GM23248 (cell line): ENCODE measurements at regions of chr17 and their contacts with region 1.

Region 1: DNA sequence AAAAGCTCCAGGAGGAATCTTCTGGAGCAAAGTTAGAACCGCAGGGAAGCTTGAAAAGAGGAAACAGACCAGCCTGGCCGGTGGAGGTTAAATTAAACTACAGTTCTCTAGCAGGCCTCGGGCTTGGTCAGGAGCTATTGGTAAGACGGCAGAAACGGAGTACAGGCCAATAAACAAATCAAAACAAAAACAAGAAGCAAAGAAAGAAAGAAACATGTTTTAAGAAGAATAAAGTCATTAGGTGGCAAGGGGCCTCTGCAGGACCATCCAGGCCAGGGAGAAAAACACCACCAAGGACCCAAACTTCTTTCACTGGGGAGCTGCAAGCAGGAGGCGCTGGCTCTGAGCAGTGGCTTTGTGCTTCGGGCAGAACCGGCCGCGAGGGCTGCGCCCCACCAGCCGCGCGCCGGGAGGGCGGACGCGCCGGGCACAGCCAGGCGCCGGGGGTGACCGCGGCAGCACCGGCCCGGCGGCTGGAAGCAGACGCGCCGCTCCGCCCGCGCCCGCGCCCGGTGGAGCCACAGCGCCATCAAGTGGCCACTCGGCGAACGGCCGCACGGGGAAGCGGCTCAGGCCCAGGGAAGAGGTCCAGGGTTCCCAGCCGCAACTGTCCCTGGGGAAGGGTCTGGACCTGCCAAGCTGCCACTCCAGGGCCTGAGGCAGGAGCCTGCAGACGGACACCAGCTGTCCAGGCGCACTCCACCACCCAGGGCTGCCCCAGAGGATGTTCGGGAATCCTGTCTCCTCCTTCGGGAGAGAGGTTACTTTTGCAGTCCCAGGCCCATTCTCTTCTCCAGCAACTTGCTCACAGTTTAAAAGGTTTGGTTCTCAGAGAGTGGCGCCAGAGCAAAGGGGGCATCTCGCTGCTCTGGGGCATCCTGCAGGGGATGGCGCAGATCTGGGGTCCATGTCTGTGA is 419.4 kb downstream of the SOX9 start:
- DNase-seq: peak; percentile 92
- H3K4me3 ChIP-seq: peak overlapping the region; percentile 59
- H3K27ac ChIP-seq: peak overlapping the region; percentile 36
- H3K4me1 ChIP-seq: peaks cover 4% of the 10 kb centered on the region; the same call in 1 of the 2 replicates
- H3K27me3 ChIP-seq: no peaks in the 10 kb centered on the region

Region 2: DNA sequence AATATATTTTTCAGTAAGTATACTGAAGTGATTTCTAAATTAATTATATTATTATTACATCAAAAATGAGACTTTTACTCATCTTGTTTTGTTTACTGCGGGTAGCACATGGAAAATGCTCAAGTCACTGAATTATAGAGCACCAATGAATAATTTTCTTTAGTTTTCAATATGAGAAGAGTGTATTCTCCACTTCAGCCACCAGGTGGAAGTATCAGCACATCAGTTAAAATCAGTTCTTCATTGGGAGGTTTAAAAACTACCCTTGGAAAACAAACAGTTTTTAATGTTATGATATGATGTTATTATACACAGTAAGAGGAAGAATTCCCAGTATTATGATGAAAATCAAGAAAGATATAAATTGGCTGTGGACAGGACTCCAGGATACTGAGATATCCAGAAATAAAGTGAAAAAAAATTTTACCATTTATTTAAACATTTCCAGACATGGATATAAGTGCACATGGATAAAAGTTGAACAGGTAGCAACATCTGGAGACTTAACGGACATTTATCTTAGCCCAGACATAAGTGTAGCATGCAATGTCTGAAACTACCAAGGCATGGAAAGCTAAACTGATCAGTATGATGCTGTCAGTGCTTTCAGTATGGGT is 1903.6 kb before region 1 on chr17:
- in situ Hi-C with region 1: loop called (anchors 25 kb)
- DNase-seq: peak; percentile 60
- H3K4me3 ChIP-seq: no peak overlapping the region
- H3K27ac ChIP-seq: no peak overlapping the region
- H3K4me1 ChIP-seq: no peaks in the 10 kb centered on the region
- H3K27me3 ChIP-seq: 0 out of 2 replicates have a peak, but pooled peaks cover 17% of the 10 kb centered on the region

Region 3: GRCh38 chr17:71118039-71118438 is 1422.2 kb before region 1 on chr17:
- in situ Hi-C with region 1: loop called (anchors 25 kb)
- DNase-seq: peak; percentile 13
- H3K4me3 ChIP-seq: no peak overlapping the region
- H3K27ac ChIP-seq: no peak overlapping the region
- H3K4me1 ChIP-seq: no peaks in the 10 kb centered on the region
- H3K27me3 ChIP-seq: no peaks in the 10 kb centered on the region

Region 4: GRCh38 chr17:71482625-71483024 is 1057.6 kb before region 1 on chr17:
- in situ Hi-C with region 1: loop called (anchors 10 kb)
- DNase-seq: no peak
- H3K4me3 ChIP-seq: no peak overlapping the region
- H3K27ac ChIP-seq: no peak overlapping the region
- H3K4me1 ChIP-seq: no peaks in the 10 kb centered on the region
- H3K27me3 ChIP-seq: no peaks in the 10 kb centered on the region

Region 5: DNA sequence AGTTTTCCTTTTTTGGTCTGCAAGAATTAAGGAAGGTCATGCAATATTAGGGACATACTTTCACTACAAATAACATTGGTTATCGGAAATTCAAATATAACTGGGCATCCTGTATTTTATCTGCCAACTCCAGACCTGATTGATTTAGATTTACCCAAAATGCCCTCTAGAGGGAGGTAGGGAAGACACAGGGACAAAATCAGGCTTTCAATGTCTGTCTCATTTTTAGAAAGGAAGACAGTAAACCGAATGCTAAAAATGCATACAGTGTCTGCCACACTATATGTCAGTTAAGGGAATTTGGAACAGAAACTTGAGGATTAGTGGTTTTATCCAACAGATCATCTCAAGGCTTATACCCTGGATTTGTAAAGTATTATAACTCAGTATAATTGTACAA is 581.1 kb before region 1 on chr17:
- in situ Hi-C with region 1: loop called (anchors 25 kb)
- DNase-seq: peak; percentile 53
- H3K4me3 ChIP-seq: no peak overlapping the region
- H3K27ac ChIP-seq: no peak overlapping the region
- H3K4me1 ChIP-seq: no peaks in the 10 kb centered on the region
- H3K27me3 ChIP-seq: no peaks in the 10 kb centered on the region

Region 6: DNA sequence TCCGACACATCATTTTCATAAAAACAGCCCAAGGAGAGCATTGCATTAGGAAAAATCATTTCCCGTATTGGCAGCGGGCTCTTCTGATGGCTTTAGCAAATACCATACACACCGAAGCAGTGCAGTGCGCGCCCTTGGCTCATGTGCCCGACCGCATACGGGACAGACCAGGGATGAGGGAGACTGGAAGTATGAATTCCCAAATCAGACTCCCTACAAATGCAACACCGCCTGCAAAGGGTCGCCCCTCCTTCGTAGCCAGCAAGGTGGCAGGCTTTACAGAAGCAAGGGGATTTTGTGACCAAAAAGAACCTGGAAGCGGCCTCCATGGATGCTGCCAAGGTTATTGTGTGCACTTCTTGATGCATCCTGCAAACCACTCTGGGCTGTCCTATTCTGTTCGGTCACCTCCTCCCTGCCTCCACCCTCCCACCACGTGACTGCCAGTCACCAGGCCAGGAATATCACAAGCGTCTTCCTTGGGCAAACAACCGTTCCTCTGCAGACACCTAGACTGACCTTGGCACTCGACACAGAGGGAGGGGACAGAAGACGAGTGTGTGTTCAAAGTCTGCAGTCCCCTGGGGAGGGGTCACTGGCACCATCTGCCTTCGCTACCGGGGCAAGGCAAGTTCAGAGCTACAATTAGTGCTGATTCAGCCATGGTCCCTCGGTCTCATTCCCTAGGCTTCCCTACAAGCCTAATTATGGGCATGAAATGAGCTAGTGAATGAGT is 91.9 kb after region 1 on chr17:
- in situ Hi-C with region 1: no loop called
- DNase-seq: no peak
- H3K4me3 ChIP-seq: no peak overlapping the region
- H3K27ac ChIP-seq: no peak overlapping the region
- H3K4me1 ChIP-seq: no peaks in the 10 kb centered on the region
- H3K27me3 ChIP-seq: peaks cover 12% of the 10 kb centered on the region